Activated B cell treated with CpG ODN at 0.5 μM for 24 hours (primary cell): ENCODE measurements at regions of chr16 and their contacts with region 1.

Region 1: DNA sequence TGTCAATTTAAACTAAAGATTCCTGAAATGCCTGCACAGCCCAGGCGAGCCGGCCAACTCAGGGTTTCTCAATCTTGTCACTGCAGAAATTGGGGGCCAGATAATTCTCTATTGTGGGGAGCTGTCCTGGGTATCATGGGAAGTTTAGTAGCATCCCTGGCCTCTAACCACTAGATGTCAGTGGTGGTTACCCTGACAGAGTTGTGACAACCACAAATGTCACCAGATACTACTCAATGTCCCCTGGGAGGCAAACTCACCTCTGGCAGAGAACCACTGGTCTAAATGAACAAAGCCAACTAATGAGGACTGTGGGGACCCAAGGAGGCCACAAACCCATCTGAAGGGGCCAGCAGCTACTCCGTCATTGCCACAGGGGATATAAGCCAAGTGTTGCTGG is 90.9 kb downstream of the MYH11 start:
- DNase-seq: peak; percentile 22
- ATAC-seq: peak; percentile 99
- H3K4me3 Mint-ChIP-seq: no peak overlapping the region
- H3K27ac Mint-ChIP-seq: no peak overlapping the region
- H3K4me1 Mint-ChIP-seq: peaks cover 3% of the 10 kb centered on the region
- H3K27me3 Mint-ChIP-seq: peaks cover 16% of the 10 kb centered on the region
- CTCF ChIP-seq: no peak

Region 2: DNA sequence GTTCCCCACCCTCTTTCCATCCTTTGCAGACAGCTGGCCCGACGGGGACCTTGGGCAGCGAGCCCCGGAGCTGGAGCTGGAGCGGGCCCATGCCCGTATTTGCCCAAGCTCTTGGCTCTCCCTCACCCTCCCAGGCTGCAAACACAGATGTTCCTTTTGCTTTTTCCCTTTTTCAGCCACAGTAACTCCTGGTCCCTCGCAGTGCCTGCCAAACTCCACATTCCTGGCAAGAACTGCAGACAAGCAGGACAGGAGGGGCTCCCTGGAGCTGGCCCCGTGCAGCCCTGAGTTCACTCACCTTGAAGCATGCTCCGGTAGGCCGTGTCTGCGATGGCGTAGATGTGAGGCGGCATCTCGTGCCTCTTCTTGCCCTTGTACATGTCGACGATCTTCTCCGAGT is 57.1 kb after region 1 on chr16:
- CTCF ChIA-PET with region 1: interaction called, 23 read pairs
- POLR2A ChIA-PET with region 1: no interaction called
- intact Hi-C with region 1: loop called (anchors 1 kb)
- DNase-seq: no peak
- ATAC-seq: no peak
- H3K4me3 Mint-ChIP-seq: no peak overlapping the region
- H3K27ac Mint-ChIP-seq: no peak overlapping the region
- H3K4me1 Mint-ChIP-seq: no peaks in the 10 kb centered on the region
- H3K27me3 Mint-ChIP-seq: no peaks in the 10 kb centered on the region
- CTCF ChIP-seq: no peak

Region 3: DNA sequence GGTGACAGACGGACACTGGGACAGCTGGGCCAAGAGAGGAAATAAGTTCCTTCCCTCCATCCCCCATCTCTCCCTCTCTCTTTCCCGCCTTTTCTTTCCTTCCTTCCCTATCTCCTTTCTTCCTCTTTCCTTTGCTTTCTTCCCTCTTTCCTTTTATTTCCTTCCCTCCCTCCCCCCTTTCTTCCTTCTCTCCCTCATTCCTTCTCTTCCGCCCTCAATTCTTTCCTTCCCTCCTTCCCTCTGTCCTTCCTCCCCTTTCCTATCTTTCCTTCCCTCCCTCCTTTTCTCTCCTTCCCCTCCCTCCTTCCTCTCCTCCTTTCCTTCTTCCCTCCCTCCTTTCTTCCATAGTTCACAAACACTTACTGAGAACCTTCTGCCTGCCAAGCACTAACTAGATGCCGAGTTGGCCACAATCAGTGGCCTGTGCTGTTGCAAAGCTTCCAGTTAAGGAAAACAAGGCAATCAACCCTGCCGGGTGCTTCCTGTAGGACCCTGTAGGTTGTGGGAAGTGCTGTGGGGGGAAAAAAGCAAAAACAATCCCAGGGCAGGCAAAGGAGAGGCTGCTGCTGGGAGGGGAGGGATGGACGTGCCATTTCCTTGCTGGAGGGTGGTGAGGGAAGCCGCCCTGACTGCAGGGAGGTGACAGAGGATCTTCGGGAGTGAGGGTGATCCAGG is 425.8 kb after region 1 on chr16:
- CTCF ChIA-PET with region 1: no interaction called
- POLR2A ChIA-PET with region 1: no interaction called
- intact Hi-C with region 1: loop called (anchors 1 kb)
- DNase-seq: no peak
- ATAC-seq: no peak
- H3K4me3 Mint-ChIP-seq: no peak overlapping the region
- H3K27ac Mint-ChIP-seq: no peak overlapping the region
- H3K4me1 Mint-ChIP-seq: peaks cover 3% of the 10 kb centered on the region
- H3K27me3 Mint-ChIP-seq: peaks cover 4% of the 10 kb centered on the region
- CTCF ChIP-seq: no peak